CD4-positive, alpha-beta memory T cell (primary cell): ENCODE measurements at regions of chr18 and their contacts with region 1.

Region 1: DNA sequence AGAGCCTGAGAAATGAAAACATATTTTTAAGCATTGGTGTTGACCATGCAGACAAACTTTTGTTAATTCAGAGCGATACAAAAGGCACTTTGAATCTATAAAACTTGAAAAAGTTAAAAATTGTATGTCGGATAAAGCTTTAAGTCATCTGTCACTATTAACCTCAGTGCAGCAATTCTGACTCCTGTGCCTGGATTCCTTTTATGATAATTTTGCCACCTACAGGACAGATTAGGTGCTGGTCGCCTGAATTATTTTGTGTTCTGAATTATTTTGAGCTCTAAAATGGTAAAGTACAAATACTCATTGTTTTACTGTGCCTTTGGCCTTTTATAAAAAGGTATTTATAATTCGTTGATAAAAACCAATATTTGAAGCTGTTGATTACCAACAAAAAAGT is 19.4 kb upstream of the RNF138 start:
- DNase-seq: peak in 4 of 5 donors; percentile 43 to 49 (median 48)
- H3K4me3 ChIP-seq: no peak overlapping the region
- H3K4me3 Mint-ChIP-seq: no peak overlapping the region
- H3K27ac ChIP-seq: no peak overlapping the region
- H3K27ac Mint-ChIP-seq: peak overlapping the region in 4 of 7 donors; percentile 13 to 64 (median 58)
- H3K4me1 ChIP-seq: peaks cover 9% of the 10 kb centered on the region
- H3K4me1 Mint-ChIP-seq: peaks cover 5 to 11% (median 8%) of the 10 kb centered on the region in 4 donors
- H3K27me3 ChIP-seq: no peaks in the 10 kb centered on the region
- H3K27me3 Mint-ChIP-seq: no peaks in the 10 kb centered on the region

Region 2: DNA sequence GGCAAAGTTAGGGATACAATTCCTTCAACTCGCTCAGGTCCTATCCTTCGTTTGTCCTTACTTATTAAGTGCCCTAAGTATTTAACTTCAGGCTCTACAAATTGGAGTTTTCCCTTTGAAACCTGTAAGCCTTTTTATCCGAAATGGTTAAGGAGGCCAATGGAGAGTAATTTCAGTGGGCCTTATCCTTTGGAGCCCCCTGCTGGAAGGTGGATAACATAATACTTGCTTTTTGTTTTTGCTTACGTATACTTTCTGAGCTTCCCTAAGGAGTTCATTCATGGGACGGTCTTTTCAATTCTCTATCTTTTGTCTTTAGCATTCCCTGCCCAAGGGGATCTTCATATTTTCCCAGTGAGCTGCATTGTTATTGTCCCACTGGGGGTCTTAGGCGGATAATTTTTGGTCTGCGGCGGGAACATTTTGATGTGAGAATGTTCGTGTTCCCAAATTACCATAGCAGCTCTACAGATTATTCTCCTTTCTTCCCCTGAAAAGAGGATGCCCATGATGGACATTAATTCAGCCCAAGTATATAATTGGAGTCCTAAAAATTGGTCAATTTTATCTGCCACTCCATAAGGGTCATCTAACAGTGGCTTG is 95.0 kb before region 1 on chr18:
- CTCF ChIA-PET with region 1: interaction called, 10 read pairs
- POLR2A ChIA-PET with region 1: no interaction called
- intact Hi-C with region 1: no loop called
- DNase-seq: peak in 4 of 5 donors; percentile 41 to 49 (median 46)
- H3K4me3 ChIP-seq: no peak overlapping the region
- H3K4me3 Mint-ChIP-seq: no peak overlapping the region
- H3K27ac ChIP-seq: no peak overlapping the region
- H3K27ac Mint-ChIP-seq: no peak overlapping the region
- H3K4me1 ChIP-seq: no peaks in the 10 kb centered on the region
- H3K4me1 Mint-ChIP-seq: peaks cover 2 to 9% (median 4%) of the 10 kb centered on the region in 4 donors
- H3K27me3 ChIP-seq: no peaks in the 10 kb centered on the region
- H3K27me3 Mint-ChIP-seq: no peaks in the 10 kb centered on the region

Region 3: GRCh38 chr18:32040936-32041335 is 31.4 kb before region 1 on chr18:
- CTCF ChIA-PET with region 1: interaction called, 19 read pairs
- POLR2A ChIA-PET with region 1: interaction called, 3 read pairs
- intact Hi-C with region 1: loop called (anchors 2 kb)
- DNase-seq: peak; percentile 74 to 78 (median 75)
- H3K4me3 ChIP-seq: no peak overlapping the region
- H3K4me3 Mint-ChIP-seq: peak overlapping the region; percentile 55 to 84 (median 70)
- H3K27ac ChIP-seq: peak overlapping the region; percentile 21
- H3K27ac Mint-ChIP-seq: peak overlapping the region; percentile 61 to 92 (median 87)
- H3K4me1 ChIP-seq: peaks cover 75% of the 10 kb centered on the region
- H3K4me1 Mint-ChIP-seq: peaks cover 48 to 75% (median 58%) of the 10 kb centered on the region in 4 donors
- H3K27me3 ChIP-seq: no peaks in the 10 kb centered on the region
- H3K27me3 Mint-ChIP-seq: no peaks in the 10 kb centered on the region

Region 4: GRCh38 chr18:32060026-32060425 is 12.3 kb before region 1 on chr18:
- CTCF ChIA-PET with region 1: interaction called, 27 read pairs
- POLR2A ChIA-PET with region 1: interaction called, 4 read pairs
- intact Hi-C with region 1: no loop called
- DNase-seq: no peak
- H3K4me3 ChIP-seq: no peak overlapping the region
- H3K4me3 Mint-ChIP-seq: peak overlapping the region in 3 of 8 donors; percentile 1 to 44 (median 31)
- H3K27ac ChIP-seq: no peak overlapping the region
- H3K27ac Mint-ChIP-seq: peak overlapping the region in 6 of 7 donors; percentile 8 to 71 (median 43)
- H3K4me1 ChIP-seq: peaks cover 38% of the 10 kb centered on the region
- H3K4me1 Mint-ChIP-seq: peaks cover 38 to 66% (median 51%) of the 10 kb centered on the region in 4 donors
- H3K27me3 ChIP-seq: no peaks in the 10 kb centered on the region
- H3K27me3 Mint-ChIP-seq: no peaks in the 10 kb centered on the region

Region 5: DNA sequence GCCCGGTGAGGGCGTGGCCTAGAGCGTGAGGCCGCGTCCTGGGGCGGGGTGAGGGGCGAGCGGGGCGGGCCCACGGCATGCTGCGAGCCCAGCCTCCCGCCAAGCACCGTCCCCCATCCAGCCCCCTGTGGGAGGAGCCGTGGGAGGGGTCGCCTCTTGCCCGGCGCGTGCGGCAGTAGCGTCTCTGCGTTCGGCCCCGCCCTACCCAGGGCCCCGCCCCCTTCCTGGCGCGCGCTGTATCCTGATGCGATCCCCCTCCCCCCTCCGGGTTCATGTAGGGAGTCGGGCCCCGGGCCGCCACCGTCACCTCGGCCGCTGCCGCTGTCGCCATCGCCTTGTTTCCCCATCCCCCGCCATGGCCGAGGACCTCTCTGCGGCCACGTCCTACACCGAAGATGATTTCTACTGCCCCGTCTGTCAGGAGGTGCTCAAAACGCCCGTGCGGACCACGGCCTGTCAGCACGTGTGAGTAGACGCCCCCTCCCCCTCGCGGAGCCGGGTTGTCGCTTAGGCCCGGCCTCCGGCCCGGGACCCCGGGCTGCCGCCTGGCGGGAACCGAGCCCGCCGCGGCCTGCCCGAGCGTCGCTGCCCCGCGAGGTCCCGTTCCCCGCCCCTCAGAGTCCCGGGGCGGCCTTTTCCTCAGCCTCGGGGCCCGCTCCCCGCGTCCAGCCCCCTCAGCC is 20.2 kb after region 1 on chr18:
- CTCF ChIA-PET with region 1: interaction called, 7 read pairs
- POLR2A ChIA-PET with region 1: interaction called, 9 read pairs
- intact Hi-C with region 1: loop called (anchors 2 kb)
- DNase-seq: peak; percentile 98 to 99 (median 99)
- H3K4me3 ChIP-seq: peak overlapping the region; percentile 91 to 96
- H3K4me3 Mint-ChIP-seq: peak overlapping the region; percentile 95 to 99 (median 98)
- H3K27ac ChIP-seq: peak overlapping the region; percentile 98
- H3K27ac Mint-ChIP-seq: peak overlapping the region; percentile 98 to 99 (median 98)
- H3K4me1 ChIP-seq: peaks cover 40% of the 10 kb centered on the region
- H3K4me1 Mint-ChIP-seq: peaks cover 28 to 55% (median 41%) of the 10 kb centered on the region in 4 donors
- H3K27me3 ChIP-seq: no peaks in the 10 kb centered on the region
- H3K27me3 Mint-ChIP-seq: no peaks in the 10 kb centered on the region